ENCODE measurements at regions of chr4 and their contacts with region 1.

Region 1: DNA sequence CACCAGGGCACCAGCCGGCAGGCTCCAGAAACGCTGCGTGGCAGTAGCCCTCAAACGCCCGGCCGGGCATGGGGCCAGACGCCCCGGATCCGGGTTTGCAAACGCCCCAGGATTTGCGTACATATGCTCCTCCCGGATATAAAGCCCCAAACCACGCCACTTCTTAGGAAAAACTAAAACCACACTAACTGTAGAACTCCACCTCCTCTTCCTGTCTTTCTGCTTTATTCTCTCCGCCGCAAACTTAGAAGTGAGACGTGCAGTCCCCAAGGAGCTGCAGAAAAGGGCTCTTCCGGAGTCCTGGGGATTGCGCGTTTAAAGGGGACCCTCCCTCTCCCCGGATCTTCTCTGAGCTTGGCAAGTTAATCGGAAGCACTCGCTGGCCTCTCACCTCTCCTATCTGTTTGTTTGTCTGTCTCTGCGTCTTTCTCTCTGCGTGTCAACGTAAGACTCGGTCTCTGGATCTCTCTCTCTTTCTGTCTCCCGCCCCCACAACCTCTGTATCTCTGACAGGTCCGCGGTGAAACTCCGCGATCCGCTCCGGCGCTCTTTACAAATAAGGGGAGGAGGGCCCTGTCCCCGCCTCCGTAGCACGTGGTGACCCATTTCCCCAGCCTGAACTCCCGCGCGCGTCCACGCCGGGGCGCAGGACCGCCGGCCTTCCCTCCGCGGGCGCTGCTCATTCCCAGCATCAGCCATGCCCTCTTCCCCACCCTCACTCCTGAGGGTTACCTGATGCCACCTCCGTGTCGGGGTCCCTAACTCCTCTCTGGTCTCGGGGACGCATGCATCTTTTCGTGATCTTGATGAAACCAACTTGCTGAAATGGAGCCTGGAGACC is at the start of gene SLC39A8:
- DNase-seq: peak; percentile 95
- H3K4me3 Mint-ChIP-seq: peak within 1 kb of the TSS; percentile 78
- H3K27ac Mint-ChIP-seq: peak within 1 kb of the TSS; percentile 96
- H3K4me1 Mint-ChIP-seq: peaks cover 43% of the 10 kb centered on the region
- H3K27me3 Mint-ChIP-seq: peaks cover 1% of the 10 kb centered on the region
- total RNA-seq, gene SLC39A8: 64.6 to 66.9 TPM

Region 2: GRCh38 chr4:102064747-102065442 is 280.3 kb before region 1 on chr4:
- CTCF ChIA-PET with region 1: no interaction called
- POLR2A ChIA-PET with region 1: no interaction called
- intact Hi-C with region 1: no loop called
- DNase-seq: no peak
- H3K4me3 Mint-ChIP-seq: no peak overlapping the region
- H3K27ac Mint-ChIP-seq: no peak overlapping the region
- H3K4me1 Mint-ChIP-seq: no peaks in the 10 kb centered on the region
- H3K27me3 Mint-ChIP-seq: peaks cover 2% of the 10 kb centered on the region

Region 3: GRCh38 chr4:102153391-102153790 is 191.8 kb before region 1 on chr4:
- CTCF ChIA-PET with region 1: no interaction called
- POLR2A ChIA-PET with region 1: no interaction called
- intact Hi-C with region 1: no loop called
- DNase-seq: no peak
- H3K4me3 Mint-ChIP-seq: no peak overlapping the region
- H3K27ac Mint-ChIP-seq: no peak overlapping the region
- H3K4me1 Mint-ChIP-seq: no peaks in the 10 kb centered on the region
- H3K27me3 Mint-ChIP-seq: no peaks in the 10 kb centered on the region

Region 4: GRCh38 chr4:102252171-102252570 is 93.0 kb before region 1 on chr4:
- CTCF ChIA-PET with region 1: no interaction called
- POLR2A ChIA-PET with region 1: no interaction called
- intact Hi-C with region 1: no loop called
- DNase-seq: no peak
- H3K4me3 Mint-ChIP-seq: no peak overlapping the region
- H3K27ac Mint-ChIP-seq: no peak overlapping the region
- H3K4me1 Mint-ChIP-seq: no peaks in the 10 kb centered on the region
- H3K27me3 Mint-ChIP-seq: no peaks in the 10 kb centered on the region

Region 5: GRCh38 chr4:102263011-102263787 is 82.0 kb before region 1 on chr4:
- CTCF ChIA-PET with region 1: no interaction called
- POLR2A ChIA-PET with region 1: no interaction called
- intact Hi-C with region 1: loop called (anchors 2 kb)
- DNase-seq: peak; percentile 13
- H3K4me3 Mint-ChIP-seq: no peak overlapping the region
- H3K27ac Mint-ChIP-seq: no peak overlapping the region
- H3K4me1 Mint-ChIP-seq: peaks cover 10% of the 10 kb centered on the region
- H3K27me3 Mint-ChIP-seq: no peaks in the 10 kb centered on the region

Region 6: GRCh38 chr4:102430461-102430910 is 85.3 kb after region 1 on chr4:
- CTCF ChIA-PET with region 1: interaction called, 29 read pairs
- POLR2A ChIA-PET with region 1: interaction called, 6 read pairs
- intact Hi-C with region 1: loop called (anchors 1 kb)
- DNase-seq: no peak
- H3K4me3 Mint-ChIP-seq: peak overlapping the region; percentile 82
- H3K27ac Mint-ChIP-seq: peak overlapping the region; percentile 62
- H3K4me1 Mint-ChIP-seq: peaks cover 8% of the 10 kb centered on the region
- H3K27me3 Mint-ChIP-seq: no peaks in the 10 kb centered on the region

Region 7: DNA sequence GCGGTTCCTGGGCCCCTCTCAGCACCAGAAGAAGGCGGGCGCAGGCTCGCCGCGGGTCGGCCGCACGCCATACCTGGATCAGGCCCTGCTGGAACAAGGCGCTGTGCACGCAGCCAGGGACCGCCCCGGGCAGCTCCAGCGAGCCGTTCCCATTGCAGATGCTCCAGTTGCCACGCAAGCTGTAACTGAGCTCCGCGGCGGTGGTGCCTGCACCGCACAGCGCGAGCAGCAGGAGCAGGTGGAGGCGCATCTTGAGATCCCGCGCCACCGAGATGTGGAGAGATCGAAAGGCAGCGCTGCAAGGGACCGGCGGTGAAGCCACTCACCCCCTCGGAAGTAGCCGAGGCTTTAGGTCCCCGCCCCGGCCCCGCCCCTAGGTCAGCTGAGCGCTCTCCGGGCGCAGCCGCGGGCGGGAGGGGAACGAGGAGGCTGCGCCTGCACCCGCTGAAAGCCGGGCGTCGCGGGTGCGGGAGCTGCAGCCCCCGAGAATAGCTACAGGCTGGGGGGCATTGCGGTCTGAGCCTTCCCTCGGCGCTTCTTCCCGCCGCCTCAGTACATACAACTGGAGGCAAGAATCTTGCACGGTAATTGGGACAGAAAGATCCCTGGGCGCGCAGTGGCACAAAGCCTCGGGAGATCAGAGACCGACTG is 415.6 kb after region 1 on chr4 and contains the start of gene MANBA:
- CTCF ChIA-PET with region 1: no interaction called
- POLR2A ChIA-PET with region 1: no interaction called
- intact Hi-C with region 1: loop called (anchors 1 kb)
- DNase-seq: peak; percentile 91
- H3K4me3 Mint-ChIP-seq: peak within 1 kb of the TSS; percentile 97
- H3K27ac Mint-ChIP-seq: peak within 1 kb of the TSS; percentile 82
- H3K4me1 Mint-ChIP-seq: peaks cover 36% of the 10 kb centered on the region
- H3K27me3 Mint-ChIP-seq: no peaks in the 10 kb centered on the region
- total RNA-seq, gene MANBA: 10.2 to 10.7 TPM

Region 8: GRCh38 chr4:103008875-103009729 is 663.9 kb after region 1 on chr4:
- CTCF ChIA-PET with region 1: interaction called, 3 read pairs
- POLR2A ChIA-PET with region 1: no interaction called
- intact Hi-C with region 1: loop called (anchors 1 kb)
- DNase-seq: no peak
- H3K4me3 Mint-ChIP-seq: no peak overlapping the region
- H3K27ac Mint-ChIP-seq: no peak overlapping the region
- H3K4me1 Mint-ChIP-seq: no peaks in the 10 kb centered on the region
- H3K27me3 Mint-ChIP-seq: no peaks in the 10 kb centered on the region

Region 9: GRCh38 chr4:103075901-103076739 is 730.9 kb after region 1 on chr4:
- CTCF ChIA-PET with region 1: no interaction called
- POLR2A ChIA-PET with region 1: no interaction called
- intact Hi-C with region 1: loop called (anchors 2 kb)
- DNase-seq: peak; percentile 72
- H3K4me3 Mint-ChIP-seq: peak overlapping the region; percentile 79
- H3K27ac Mint-ChIP-seq: peak overlapping the region; percentile 99
- H3K4me1 Mint-ChIP-seq: peaks cover 42% of the 10 kb centered on the region
- H3K27me3 Mint-ChIP-seq: no peaks in the 10 kb centered on the region

Region 10: DNA sequence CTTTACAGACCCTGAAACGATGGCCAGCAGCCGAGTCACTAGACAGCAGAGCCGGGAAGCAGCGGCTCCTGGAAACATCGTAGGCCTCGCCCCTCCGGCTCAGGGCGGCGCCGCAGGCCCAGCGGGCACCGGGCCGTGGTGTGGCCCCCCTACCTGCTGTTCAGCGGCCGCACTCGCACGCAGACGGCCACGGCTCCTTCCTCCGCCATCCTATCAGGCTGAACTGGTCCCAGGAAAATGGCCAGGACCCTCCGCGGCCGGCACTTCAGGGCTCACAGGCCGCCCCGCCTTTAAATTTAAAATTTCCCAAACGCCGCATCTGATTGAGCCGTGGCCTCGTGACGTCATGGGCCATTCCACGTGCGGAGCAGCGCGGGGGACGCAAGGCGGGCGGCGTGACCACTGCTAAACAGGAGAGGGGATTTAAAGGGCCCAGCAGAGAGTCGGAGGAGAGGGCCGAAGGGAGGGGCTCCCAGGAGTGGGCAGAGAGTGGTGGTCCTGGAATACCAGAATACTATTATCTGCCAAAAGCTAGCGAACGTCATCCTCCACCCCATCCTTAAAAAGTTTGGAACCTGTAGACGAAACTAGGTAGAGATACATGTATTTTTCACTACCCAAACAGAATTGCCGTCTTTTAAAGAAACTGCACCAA is 853.1 kb after region 1 on chr4 and contains the start of gene CENPE:
- CTCF ChIA-PET with region 1: no interaction called
- POLR2A ChIA-PET with region 1: no interaction called
- intact Hi-C with region 1: loop called (anchors 10 kb)
- DNase-seq: peak; percentile 89
- H3K4me3 Mint-ChIP-seq: peak within 1 kb of the TSS; percentile 85
- H3K27ac Mint-ChIP-seq: peak within 1 kb of the TSS; percentile 86
- H3K4me1 Mint-ChIP-seq: peaks cover 12% of the 10 kb centered on the region
- H3K27me3 Mint-ChIP-seq: peaks cover 5% of the 10 kb centered on the region
- total RNA-seq, gene CENPE: 41.9 to 49.1 TPM

Measured in activated CD4-positive, alpha-beta memory T cell treated with anti-CD3 and anti-CD28 coated beads for 36 hours (primary cell).